Activated CD4-positive, alpha-beta T cell treated with anti-CD3 and anti-CD28 coated beads for 36 hours (primary cell): ENCODE measurements at regions of chr2 and their contacts with region 1.

Region 1: DNA sequence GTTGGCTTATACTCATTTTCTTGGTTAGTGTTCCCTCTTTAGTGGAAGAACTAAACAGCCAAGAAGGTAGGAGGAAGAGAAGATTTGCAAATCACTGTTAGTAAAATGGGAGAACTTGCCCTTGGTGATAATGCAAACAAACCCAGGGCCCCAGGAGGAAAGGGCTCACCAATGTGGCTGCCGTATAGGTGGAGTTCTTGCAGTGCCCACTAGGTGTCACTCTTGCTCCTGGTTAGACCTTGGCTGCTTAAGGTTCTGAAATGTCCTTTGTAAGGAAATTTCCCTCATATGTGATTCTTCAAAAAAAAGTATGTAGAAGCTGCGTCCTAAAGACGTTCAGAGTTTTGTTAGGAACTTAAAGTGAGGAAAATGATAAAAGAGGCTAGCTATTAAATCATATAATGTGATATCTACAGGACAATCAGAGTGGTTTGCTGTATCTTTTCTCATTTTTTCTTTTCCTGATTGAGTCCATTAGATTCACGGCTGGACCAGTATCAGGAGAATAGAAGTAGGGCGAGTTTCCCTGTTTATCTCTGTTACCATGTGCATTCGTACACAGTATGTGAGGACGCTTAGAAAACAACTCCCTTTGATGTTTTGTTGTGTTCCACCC is 48.6 kb downstream of the RPIA start:
- DNase-seq: peak; percentile 84
- ATAC-seq: peak; percentile 76
- H3K4me3 Mint-ChIP-seq: no peak overlapping the region
- H3K27ac Mint-ChIP-seq: no peak overlapping the region
- H3K4me1 Mint-ChIP-seq: peaks cover 23% of the 10 kb centered on the region
- H3K27me3 Mint-ChIP-seq: no peaks in the 10 kb centered on the region

Region 2: DNA sequence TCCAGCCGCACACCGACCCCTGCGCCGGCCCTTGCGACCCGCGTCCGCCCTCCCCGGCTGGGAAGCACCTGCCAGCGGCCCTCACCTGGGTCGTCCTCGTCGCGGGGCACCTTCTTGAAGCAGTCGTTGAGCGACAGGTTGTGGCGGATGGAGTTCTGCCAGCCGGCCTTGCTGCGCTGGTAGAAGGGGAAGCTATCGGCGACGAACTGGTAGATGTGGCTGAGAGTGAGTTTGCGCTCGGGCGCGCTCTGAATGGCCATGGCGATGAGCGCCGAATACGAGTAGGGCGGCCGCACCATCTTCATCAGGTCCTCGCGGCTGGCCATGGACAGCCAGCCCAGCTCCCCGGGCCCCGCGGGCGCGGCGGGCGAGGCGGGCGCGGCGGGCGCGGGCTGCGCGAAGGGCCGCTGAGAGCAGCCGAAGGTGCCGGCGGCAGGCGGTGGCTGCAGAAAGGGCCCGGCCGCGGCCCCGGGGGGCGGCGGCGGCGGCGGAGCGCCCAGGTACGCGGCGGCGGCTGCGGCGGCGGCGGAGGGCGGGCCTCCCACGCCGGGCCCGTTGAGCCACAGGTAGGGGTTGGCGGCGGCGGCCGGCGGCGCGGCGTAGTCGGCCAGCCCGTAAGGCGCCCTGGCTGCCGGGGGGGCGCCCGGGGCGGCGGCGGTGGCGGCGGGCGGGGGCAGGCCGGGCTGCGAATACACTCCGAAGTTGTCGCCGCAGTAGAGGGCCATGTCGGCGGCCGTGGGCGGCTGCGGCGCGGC is 288.1 kb before region 1 on chr2:
- CTCF ChIA-PET with region 1: no interaction called
- POLR2A ChIA-PET with region 1: no interaction called
- intact Hi-C with region 1: no loop called
- DNase-seq: peak; percentile 30
- ATAC-seq: peak; percentile 19
- H3K4me3 Mint-ChIP-seq: peak overlapping the region; percentile 49
- H3K27ac Mint-ChIP-seq: no peak overlapping the region
- H3K4me1 Mint-ChIP-seq: peaks cover 8% of the 10 kb centered on the region
- H3K27me3 Mint-ChIP-seq: peaks cover 56% of the 10 kb centered on the region

Region 3: DNA sequence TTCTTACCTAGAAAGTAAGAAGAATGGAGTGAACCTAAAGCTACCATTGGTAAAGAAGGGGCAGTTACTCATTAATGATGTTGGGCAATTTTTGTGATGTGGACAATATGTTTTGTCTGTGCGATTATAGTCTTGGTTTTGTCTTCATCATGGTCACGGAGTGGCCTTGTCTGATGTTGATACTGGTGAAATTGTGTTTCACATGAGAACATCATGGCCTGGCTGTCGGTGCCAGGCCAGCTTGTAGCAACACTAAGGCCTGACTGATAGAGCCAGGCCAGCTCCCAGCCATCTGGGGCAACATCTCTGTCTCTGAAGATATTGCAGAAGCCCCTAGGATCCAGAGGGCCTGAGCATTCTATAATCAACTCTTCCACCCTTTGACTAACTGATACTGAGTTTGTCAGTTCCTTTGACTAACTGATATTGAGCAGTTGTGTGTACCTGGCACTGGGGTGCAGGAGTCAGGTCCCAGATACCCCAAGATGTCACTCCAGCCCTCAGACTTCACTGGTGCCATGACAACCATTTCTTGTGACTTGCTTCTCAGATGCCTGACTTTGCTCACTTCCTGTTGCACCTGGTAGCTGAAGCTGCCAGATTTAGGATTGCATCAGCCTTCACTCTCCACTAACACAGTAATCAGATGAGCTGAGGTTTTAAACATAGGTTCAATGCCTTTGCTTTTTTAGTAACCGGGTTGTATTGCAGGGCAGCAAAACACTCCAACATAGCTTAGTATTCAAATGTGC is 13.9 kb after region 1 on chr2:
- CTCF ChIA-PET with region 1: interaction called, 22 read pairs
- POLR2A ChIA-PET with region 1: interaction called, 3 read pairs
- intact Hi-C with region 1: no loop called
- DNase-seq: peak; percentile 64
- ATAC-seq: peak; percentile 92
- H3K4me3 Mint-ChIP-seq: no peak overlapping the region
- H3K27ac Mint-ChIP-seq: peak overlapping the region; percentile 99
- H3K4me1 Mint-ChIP-seq: peaks cover 54% of the 10 kb centered on the region
- H3K27me3 Mint-ChIP-seq: no peaks in the 10 kb centered on the region

Region 4: DNA sequence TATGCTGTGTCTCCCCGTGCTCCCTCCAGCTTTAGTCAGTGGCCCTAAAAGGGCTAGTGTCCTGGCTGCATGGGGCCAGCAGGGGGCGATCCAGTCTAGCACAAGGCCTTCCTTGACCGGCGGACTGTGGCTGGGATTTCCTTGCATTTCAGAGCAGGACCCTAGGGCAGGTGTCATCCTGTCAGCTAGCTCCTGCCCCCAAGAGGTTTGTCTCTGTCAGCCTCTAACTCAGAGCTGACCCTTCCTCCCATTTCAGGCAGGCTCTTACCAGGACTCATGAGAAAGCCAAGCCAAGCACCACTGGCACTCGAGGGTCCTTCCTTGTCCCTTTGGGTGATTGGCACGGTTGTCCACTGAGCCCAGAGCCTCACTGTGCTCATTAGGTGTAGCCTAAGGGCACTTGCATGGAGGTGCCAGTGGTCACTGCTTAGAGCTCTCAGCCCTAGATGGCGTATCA is 91.7 kb after region 1 on chr2:
- CTCF ChIA-PET with region 1: interaction called, 3 read pairs
- POLR2A ChIA-PET with region 1: no interaction called
- intact Hi-C with region 1: loop called (anchors 1 to 5 kb)
- DNase-seq: peak; percentile 77
- ATAC-seq: peak; percentile 78
- H3K4me3 Mint-ChIP-seq: no peak overlapping the region
- H3K27ac Mint-ChIP-seq: no peak overlapping the region
- H3K4me1 Mint-ChIP-seq: no peaks in the 10 kb centered on the region
- H3K27me3 Mint-ChIP-seq: peaks cover 6% of the 10 kb centered on the region

Region 5: DNA sequence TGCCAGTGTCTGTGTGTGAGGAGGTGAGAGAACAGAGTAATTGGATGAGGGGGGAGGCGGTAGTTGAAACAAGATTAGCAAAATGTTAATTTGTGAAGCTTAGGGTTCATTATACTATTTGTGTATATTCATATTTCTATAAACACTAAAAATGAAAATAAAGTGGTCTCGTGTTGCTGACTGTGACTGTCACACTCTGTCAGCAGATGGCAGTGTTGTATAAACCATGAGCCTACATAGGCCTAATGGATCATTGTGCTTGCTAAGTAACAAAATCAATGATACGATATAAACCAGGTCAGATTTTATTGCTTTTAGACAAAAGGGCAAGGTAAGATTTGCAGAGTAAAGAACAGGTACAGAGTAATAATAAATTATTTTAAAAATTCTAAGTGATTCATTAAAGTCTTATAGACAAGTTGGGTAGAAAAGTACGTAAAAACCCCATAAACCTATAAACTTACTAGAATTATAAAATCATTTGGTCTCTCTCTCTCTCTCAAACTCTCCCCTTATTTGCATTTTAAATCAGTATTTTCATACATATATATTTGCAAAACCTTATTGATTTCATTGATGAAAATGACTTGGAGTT is 134.1 kb after region 1 on chr2:
- CTCF ChIA-PET with region 1: interaction called, 4 read pairs
- POLR2A ChIA-PET with region 1: no interaction called
- intact Hi-C with region 1: loop called (anchors 5 kb)
- DNase-seq: peak; percentile 63
- ATAC-seq: peak; percentile 78
- H3K4me3 Mint-ChIP-seq: no peak overlapping the region
- H3K27ac Mint-ChIP-seq: no peak overlapping the region
- H3K4me1 Mint-ChIP-seq: no peaks in the 10 kb centered on the region
- H3K27me3 Mint-ChIP-seq: peaks cover 7% of the 10 kb centered on the region

Region 6: GRCh38 chr2:88919087-88919738 is 179.1 kb after region 1 on chr2:
- CTCF ChIA-PET with region 1: interaction called, 3 read pairs
- POLR2A ChIA-PET with region 1: no interaction called
- intact Hi-C with region 1: loop called in 1 of 2 experiments (anchors 5 kb)
- DNase-seq: peak; percentile 17
- ATAC-seq: no peak
- H3K4me3 Mint-ChIP-seq: no peak overlapping the region
- H3K27ac Mint-ChIP-seq: no peak overlapping the region
- H3K4me1 Mint-ChIP-seq: peaks cover 1% of the 10 kb centered on the region
- H3K27me3 Mint-ChIP-seq: peaks cover 5% of the 10 kb centered on the region

Region 7: DNA sequence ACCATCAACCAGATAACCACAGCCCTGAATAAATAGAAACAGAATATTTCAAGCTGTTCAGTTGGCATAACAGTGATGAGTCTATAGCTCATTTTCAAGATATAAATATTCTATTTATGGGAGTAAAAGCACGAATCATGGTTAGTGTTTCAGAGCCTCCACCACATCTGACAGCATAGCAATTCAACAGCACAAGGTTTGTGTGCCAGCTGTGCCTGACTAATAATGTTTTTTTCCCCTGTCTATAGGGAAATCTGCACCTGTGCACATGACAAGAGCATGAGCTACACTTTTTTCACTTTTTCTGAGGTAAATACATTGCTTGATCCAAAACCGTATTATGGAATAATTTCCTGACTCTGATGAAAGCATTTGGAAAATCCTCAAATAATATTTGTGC is 202.7 kb after region 1 on chr2:
- CTCF ChIA-PET with region 1: no interaction called
- POLR2A ChIA-PET with region 1: no interaction called
- intact Hi-C with region 1: loop called in 1 of 2 experiments (anchors 10 kb)
- DNase-seq: no peak
- ATAC-seq: no peak
- H3K4me3 Mint-ChIP-seq: no peak overlapping the region
- H3K27ac Mint-ChIP-seq: no peak overlapping the region
- H3K4me1 Mint-ChIP-seq: no peaks in the 10 kb centered on the region
- H3K27me3 Mint-ChIP-seq: peaks cover 4% of the 10 kb centered on the region